ENCODE measurements at regions of chr14 and their contacts with region 1.

Region 1: DNA sequence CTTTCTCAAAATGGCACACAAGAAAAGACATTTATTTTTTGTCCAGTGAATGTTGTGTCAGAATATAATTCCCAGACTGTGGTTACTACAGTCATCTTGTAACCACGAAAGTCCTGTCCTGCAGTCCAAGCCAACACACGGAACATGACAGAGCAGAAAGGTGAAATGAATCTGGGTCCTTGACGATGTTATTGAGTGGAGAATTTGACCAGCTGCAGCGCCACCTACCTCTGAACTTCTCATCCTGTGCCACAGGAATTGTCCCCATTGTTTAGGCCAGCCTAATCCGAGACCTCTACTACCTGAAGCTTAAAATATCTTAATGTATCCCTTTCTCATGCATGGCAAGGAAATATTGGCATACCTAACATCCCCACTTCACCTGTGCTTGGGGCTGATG is 64.1 kb upstream of the OTX2 start:
- DNase-seq: peak in 3 of 4 experiments; percentile 5 to 36 (median 22)
- ATAC-seq: peak; percentile 85
- H3K4me3 ChIP-seq: no peak overlapping the region
- H3K27ac ChIP-seq: no peak overlapping the region
- H3K4me1 ChIP-seq: no peaks in the 10 kb centered on the region
- H3K27me3 ChIP-seq: peaks cover 0 to 5% of the 10 kb centered on the region in 2 experiments; a peak in 1 of 5 replicates
- CTCF ChIP-seq: peak; percentile 33 to 50 (median 48); a peak in 5 of 6 replicates
- EP300 ChIP-seq: no peak
- POLR2A ChIP-seq: no peak
- RAD21 ChIP-seq: peak in 1 of 2 experiments; percentile 56; a peak in 2 of 4 replicates

Region 2: DNA sequence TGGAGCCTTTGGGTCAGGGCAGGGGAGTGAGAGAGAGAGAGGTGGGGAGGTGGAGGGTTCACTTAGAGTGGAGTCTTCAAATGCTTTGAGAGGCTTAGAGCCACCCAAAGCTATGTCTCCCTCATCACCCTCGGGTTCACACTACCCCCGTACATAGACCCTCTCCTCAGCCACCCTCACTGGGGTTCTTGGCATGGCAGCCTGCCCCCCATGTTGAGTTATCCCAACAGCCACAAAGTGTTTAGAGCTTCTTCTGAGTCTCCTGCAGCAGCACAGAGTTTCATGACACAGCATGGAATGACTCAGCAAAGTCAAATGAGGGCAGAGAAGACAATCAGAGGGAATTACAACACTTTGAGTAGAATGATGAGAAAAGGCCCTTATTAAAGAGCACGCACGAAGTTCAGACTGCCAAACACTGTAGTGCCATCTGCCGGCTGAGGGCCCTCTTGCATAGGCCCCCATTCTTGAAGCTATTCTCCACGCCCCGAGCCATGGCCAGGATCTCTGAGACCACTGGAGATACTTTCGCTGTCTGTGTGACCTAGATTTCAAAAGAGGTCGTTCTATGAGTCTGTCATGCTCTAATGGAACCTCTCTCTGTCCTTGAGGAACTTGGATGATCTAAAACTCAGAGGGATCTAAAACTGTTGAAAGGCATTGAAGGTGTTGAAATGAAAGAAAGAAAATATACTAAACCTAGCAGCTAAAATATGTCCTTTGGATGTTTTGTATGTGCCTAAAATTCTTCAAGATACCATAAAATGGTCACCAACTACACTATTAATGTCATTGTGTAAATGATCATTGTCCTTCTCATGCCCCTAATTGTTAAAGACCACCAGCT is 534.3 kb before region 1 on chr14:
- CTCF ChIA-PET with region 1: no interaction called
- POLR2A ChIA-PET with region 1: no interaction called
- in situ Hi-C with region 1: no loop called
- intact Hi-C with region 1: no loop called
- DNase-seq: peak; percentile 40 to 68 (median 52)
- ATAC-seq: peak; percentile 97
- H3K4me3 ChIP-seq: no peak overlapping the region
- H3K27ac ChIP-seq: no peak overlapping the region; the same call in 2 of the 3 replicates
- H3K4me1 ChIP-seq: peaks cover 0 to 17% of the 10 kb centered on the region in 2 experiments; a peak in 3 of 5 replicates
- H3K27me3 ChIP-seq: no peaks in the 10 kb centered on the region
- CTCF ChIP-seq: peak; percentile 67 to 78 (median 76)
- EP300 ChIP-seq: peak; percentile 48; the same call in 1 of the 2 replicates
- POLR2A ChIP-seq: no peak
- RAD21 ChIP-seq: peak; percentile 58 to 84

Region 3: GRCh38 chr14:56659964-56660551 is 214.3 kb before region 1 on chr14:
- CTCF ChIA-PET with region 1: no interaction called
- POLR2A ChIA-PET with region 1: no interaction called
- in situ Hi-C with region 1: no loop called
- intact Hi-C with region 1: loop called (anchors 10 kb)
- DNase-seq: peak; percentile 32 to 44 (median 36)
- ATAC-seq: peak; percentile 80
- H3K4me3 ChIP-seq: no peak overlapping the region
- H3K27ac ChIP-seq: no peak overlapping the region
- H3K4me1 ChIP-seq: no peaks in the 10 kb centered on the region
- H3K27me3 ChIP-seq: peaks cover 5 to 7% of the 10 kb centered on the region in 2 experiments; a peak in 4 of 5 replicates
- CTCF ChIP-seq: peak; percentile 60 to 74 (median 61)
- EP300 ChIP-seq: no peak
- POLR2A ChIP-seq: no peak
- RAD21 ChIP-seq: peak; percentile 69 to 87